Left lung (tissue), 14 donors: ENCODE measurements at regions of chr6 and their contacts with region 1.

Region 1: GRCh38 chr6:41683510-41684310 is 45.4 kb downstream of the MDFI start:
- DNase-seq: peak; percentile 78 to 96 (median 85)
- ATAC-seq: peak; percentile 84
- H3K4me3 ChIP-seq: peak overlapping the region; percentile 27 to 36
- H3K27ac ChIP-seq: no peak overlapping the region
- H3K4me1 ChIP-seq: peaks cover 11 to 25% of the 10 kb centered on the region in 2 donors
- H3K27me3 ChIP-seq: peaks cover 0 to 3% of the 10 kb centered on the region in 2 donors
- CTCF ChIP-seq: peak; percentile 87 to 92

Region 2: GRCh38 chr6:41367700-41368099 is 316.0 kb before region 1 on chr6:
- intact Hi-C with region 1: loop called in 1 of 2 experiments (anchors 5 kb)
- DNase-seq: peak in 2 of 4 donors; percentile 34 to 78
- ATAC-seq: peak; percentile 69
- H3K4me3 ChIP-seq: no peak overlapping the region
- H3K27ac ChIP-seq: no peak overlapping the region
- H3K4me1 ChIP-seq: peaks cover 5 to 14% of the 10 kb centered on the region in 2 donors
- H3K27me3 ChIP-seq: peaks cover 28 to 95% of the 10 kb centered on the region in 2 donors
- CTCF ChIP-seq: peak in 1 of 2 donors; percentile 22

Region 3: DNA sequence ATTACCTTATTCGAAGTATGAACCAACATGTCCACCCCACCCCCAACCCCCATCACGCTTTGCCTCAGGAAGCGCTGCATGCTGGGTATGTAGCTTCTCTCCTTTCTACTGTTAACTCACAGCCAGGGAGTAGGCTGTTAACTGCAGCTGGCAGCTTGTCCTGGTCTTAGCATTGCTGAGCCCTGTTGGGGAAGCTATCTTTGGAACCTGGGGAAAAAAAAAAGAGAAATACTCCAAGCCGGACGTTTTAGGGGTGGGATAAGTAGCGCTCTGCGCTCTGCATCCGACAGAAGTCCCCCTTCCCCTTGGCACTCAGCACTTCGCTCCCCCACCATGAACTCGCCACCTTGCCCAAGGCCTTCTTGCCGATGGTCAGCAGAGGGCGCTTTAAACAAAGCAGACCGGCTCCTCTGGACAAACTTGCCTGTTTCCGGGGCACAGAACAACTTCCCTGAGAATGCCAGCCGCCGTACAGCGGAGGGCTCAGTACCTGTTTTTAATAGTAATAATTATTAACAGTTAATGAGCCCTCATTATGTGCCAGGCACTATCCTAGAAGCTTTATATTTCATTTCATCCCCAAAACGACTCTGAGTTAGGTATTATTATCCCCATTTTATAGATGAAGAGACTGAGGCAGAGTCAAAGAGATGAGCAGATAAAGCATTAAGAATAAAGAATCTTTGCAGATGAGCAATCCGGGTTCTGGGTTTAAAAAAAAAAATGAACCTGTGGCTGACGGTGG is 80.7 kb before region 1 on chr6:
- intact Hi-C with region 1: loop called (anchors 2 to 5 kb)
- DNase-seq: peak in 3 of 4 donors; percentile 80 to 92 (median 85)
- ATAC-seq: peak; percentile 91
- H3K4me3 ChIP-seq: no peak overlapping the region
- H3K27ac ChIP-seq: no peak overlapping the region
- H3K4me1 ChIP-seq: peaks cover 0 to 3% of the 10 kb centered on the region in 2 donors
- H3K27me3 ChIP-seq: no peaks in the 10 kb centered on the region
- CTCF ChIP-seq: peak; percentile 89 to 90

Region 4: GRCh38 chr6:41901882-41902519 is 218.3 kb after region 1 on chr6:
- intact Hi-C with region 1: no loop called
- DNase-seq: no peak
- ATAC-seq: peak; percentile 46
- H3K4me3 ChIP-seq: no peak overlapping the region
- H3K27ac ChIP-seq: no peak overlapping the region
- H3K4me1 ChIP-seq: peaks cover 0 to 5% of the 10 kb centered on the region in 2 donors
- H3K27me3 ChIP-seq: no peaks in the 10 kb centered on the region
- CTCF ChIP-seq: no peak